ENCODE measurements at regions of chr19 and their contacts with region 1.

Region 1: DNA sequence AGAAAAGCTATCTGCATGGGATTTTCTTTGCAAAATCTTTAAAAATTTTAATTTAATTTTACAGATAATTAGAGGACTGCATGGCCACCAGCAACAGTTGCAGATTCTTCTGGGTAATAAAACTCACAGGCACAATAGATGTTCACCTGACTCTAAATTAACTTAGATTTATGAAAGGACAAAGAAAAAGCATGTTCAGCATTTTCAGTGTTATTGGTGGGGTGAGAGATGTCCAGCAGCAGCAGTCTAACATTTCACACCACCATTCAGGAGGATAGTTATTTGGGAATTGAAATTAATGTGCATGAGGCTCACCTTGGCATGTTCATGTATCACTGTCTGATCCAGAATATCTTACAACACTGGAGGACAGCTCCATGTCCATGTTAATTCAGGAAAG is 74.0 kb downstream of the SCGB2B2 start:
- DNase-seq: no peak
- H3K4me3 ChIP-seq: no peak overlapping the region
- H3K27ac ChIP-seq: no peak overlapping the region
- H3K27me3 ChIP-seq: no peaks in the 10 kb centered on the region
- CTCF ChIP-seq: no peak

Region 2: GRCh38 chr19:33317531-33317930 is 1285.5 kb before region 1 on chr19:
- CTCF ChIA-PET with region 1: interaction called, 12 read pairs
- POLR2A ChIA-PET with region 1: no interaction called
- DNase-seq: no peak
- H3K4me3 ChIP-seq: no peak overlapping the region
- H3K27ac ChIP-seq: no peak overlapping the region
- H3K27me3 ChIP-seq: peaks cover 6% of the 10 kb centered on the region
- CTCF ChIP-seq: no peak

Region 3: GRCh38 chr19:34759218-34759917 is 156.4 kb after region 1 on chr19:
- CTCF ChIA-PET with region 1: no interaction called
- POLR2A ChIA-PET with region 1: no interaction called
- DNase-seq: no peak
- H3K4me3 ChIP-seq: no peak overlapping the region
- H3K27ac ChIP-seq: no peak overlapping the region
- H3K27me3 ChIP-seq: no peaks in the 10 kb centered on the region
- CTCF ChIP-seq: no peak